GM10248 (cell line): ENCODE measurements at regions of chr3 and their contacts with region 1.

Region 1: DNA sequence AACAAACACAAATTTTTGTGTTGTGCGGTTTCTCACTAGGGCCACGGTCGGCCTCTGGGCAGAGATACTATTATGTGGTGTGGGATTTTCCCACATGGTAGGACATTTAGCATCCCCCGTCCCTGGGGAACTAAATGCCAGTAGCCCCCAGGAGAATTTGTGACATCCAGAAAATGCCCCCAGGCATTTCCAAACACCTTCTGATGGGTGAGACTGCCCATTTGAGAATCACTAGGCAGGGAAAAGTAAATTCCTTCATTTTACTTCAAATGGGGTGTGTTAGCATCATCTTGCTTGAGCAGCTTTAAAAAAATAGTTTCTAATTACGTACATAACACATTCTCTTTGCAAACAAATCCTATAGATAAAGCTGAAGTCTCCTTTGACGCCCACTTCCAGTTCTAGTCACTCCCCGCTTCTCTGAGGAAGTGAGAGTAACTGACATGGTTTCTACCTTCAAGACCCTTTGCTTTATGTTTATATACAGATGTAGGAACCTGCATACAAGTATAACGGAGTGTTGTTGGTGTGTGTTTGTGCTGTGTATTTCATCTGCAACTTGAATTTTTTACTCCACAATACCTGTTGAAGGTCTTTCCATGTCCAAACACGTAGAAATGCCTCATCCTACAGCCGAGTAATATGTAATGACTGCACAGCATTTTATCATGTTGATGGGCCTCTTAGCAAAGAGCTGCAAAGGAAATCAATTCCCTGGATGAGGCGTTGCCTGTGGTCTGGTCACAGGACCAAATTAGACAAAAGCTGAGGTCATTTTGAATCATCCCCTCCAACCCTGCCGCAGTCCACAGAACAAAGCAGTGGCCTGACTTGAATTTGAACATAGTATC is 31.4 kb upstream of the ZBTB38 start:
- DNase-seq: peak; percentile 78
- CTCF ChIP-seq: no peak

Region 2: DNA sequence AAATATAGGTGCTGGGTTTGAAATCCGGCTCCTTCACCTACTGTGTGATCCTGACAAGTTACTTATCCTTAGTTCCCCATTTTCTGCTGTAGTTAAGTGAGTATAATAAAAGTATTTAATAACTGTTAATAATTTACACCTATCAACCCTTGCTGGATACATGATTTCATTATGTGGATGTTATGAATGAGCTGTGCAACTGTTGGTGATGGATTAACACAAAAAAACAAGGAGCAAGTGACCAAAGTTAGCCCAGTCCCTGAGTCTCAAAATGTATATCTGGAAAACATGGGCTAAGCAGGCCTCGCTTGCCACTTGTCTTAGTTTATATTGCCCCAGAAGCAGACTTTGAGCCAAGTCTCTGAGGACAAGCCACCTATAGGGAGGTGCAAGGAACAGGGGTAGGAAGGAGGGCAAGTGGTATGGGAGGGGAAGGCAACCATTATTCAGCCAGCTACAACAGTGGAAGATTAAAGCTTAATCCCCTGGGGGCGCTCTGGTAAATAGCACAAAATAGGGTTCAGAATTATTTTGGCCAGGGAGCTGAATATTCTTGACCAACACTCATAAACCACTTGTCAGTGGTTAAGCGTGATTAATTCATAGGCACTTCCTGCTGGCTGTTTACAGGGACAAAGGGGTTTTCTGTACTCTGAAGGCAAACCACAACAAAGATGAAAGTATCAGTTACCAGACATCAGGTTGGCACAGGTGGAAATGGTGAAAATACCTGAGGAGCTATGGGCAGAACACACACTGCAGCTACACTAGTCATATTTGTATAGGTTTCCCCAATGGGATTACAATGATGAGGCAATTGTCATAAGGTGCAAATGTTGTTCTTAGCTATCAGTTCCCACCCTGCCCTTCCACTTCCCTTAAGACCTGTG is 582.8 kb before region 1 on chr3:
- CTCF ChIA-PET with region 1: no interaction called
- POLR2A ChIA-PET with region 1: no interaction called
- DNase-seq: peak; percentile 19
- CTCF ChIP-seq: no peak

Region 3: DNA sequence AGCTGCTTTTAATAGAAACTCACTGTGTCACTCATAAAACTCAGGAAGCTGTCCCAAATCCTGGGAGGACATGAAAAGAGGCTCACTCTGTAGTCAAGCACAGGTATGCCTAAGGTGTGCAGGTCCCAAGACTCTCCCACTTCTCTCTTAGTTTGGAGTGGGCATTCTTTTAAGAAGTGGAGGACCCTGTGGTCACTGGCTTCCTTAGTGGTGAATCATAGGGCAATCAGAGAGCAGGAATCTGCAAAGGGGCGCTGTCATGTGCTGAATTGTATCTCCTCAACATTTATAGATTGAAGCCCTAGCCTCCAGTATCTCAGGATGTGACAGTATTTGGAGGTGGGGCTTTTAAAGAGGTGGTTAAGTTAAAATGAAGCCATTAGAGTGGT is 15.8 kb before region 1 on chr3:
- CTCF ChIA-PET with region 1: interaction called, 10 read pairs
- POLR2A ChIA-PET with region 1: no interaction called
- DNase-seq: no peak
- CTCF ChIP-seq: no peak